AG04450 (cell line): ENCODE measurements at regions of chr2 and their contacts with region 1.

Region 1: DNA sequence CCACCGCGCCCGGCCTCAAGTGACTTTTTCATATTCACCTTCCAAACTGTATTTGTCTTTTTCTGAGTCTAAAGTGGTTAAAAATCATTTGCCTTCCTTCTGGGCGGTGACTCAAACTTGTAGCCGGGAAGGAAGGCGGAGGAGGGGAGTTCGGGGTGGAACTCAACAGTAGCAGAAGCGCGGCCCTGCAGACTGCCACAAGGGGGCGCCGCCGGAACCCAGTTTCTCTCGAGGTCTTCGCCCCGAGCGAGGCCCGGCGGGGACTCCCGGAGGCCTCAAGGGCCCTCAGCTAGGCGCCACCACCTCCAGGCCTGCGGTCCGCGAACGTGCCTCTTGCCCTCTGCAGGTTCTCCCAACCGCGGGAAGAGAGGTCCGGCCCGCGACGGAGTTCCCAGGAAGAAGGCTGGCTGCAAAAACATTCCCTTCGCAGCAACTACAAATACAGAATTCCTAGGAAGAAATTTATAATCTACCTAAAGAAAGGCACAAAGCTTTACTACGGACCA is 16.8 kb upstream of the ITM2C start:
- DNase-seq: peak; percentile 44
- H3K4me3 ChIP-seq: no peak overlapping the region; the same call in 1 of the 2 replicates
- H3K27ac ChIP-seq: no peak overlapping the region
- H3K27me3 ChIP-seq: peaks cover 22% of the 10 kb centered on the region
- CTCF ChIP-seq: peak; percentile 85

Region 2: DNA sequence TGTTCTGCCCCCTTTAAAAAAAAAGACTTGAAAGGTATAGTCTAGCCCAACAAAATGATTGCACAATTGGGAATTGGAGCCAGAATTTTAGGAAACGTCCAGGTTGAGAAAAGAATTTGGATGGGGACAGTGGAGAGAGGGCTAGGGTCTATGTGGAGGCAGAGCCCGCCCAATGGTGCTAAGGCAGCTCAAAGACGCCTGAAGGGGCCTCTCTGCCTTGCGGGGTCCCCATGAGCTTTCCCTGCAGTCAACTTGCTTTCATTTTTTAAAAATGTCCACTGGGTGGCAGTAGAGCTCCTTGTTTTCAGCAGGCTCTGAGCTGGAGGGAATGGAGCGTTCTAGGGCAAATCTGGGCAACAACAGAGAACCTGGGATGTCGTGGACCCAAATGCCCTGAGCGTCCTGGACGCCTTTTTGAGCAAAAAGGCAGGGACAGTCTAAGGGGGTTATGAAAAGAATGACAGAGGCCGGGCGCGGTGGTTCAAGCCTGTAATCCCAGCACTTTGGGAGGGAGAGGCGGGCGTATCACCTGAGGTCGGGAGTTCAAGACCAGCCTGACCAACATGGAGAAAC is 23.4 kb before region 1 on chr2:
- CTCF ChIA-PET with region 1: interaction called, 14 read pairs
- POLR2A ChIA-PET with region 1: no interaction called
- DNase-seq: peak; percentile 70
- H3K4me3 ChIP-seq: peak overlapping the region; percentile 53
- H3K27ac ChIP-seq: no peak overlapping the region
- H3K27me3 ChIP-seq: peaks cover 19% of the 10 kb centered on the region
- CTCF ChIP-seq: peak; percentile 73

Region 3: DNA sequence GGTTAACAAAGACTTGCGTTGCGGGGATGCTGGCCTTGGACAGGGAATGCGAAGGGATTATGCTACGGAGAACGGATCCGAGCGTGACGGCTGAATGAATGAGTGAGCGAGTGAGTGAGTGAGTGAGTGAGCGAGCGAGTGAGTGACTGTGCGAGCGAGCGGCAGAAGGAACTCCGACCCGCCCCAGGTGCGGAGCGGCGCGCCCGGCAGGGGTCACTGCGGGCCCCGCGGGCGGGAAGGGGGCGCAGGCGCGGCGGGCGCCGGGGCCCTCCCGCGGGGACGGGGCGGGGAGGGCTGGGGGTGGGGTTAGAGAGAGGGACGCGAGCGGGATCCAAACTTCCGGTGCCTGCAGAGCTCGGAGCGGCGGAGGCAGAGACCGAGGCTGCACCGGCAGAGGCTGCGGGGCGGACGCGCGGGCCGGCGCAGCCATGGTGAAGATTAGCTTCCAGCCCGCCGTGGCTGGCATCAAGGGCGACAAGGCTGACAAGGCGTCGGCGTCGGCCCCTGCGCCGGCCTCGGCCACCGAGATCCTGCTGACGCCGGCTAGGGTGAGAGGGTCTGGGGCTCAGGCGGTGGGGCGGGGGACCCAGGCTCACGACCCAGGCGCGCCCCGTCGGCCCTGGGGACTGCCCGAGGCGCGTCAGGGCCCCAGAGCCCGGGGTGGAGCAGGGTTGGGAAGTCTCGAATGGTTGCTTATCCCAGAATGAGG is 16.8 kb after region 1 on chr2 and contains the start of gene ITM2C:
- CTCF ChIA-PET with region 1: interaction called, 11 read pairs
- POLR2A ChIA-PET with region 1: no interaction called
- DNase-seq: peak; percentile 7
- H3K4me3 ChIP-seq: peak within 1 kb of the TSS; percentile 82
- H3K27ac ChIP-seq: no peak within 1 kb of the TSS
- H3K27me3 ChIP-seq: peaks cover 28% of the 10 kb centered on the region
- CTCF ChIP-seq: peak; percentile 44
- polyA plus RNA-seq, gene ITM2C: 371 and 551 TPM in 2 replicates

Region 4: GRCh38 chr2:230870544-230871360 is 22.8 kb after region 1 on chr2:
- CTCF ChIA-PET with region 1: interaction called, 11 read pairs
- POLR2A ChIA-PET with region 1: no interaction called
- DNase-seq: no peak
- H3K4me3 ChIP-seq: no peak overlapping the region
- H3K27ac ChIP-seq: no peak overlapping the region
- H3K27me3 ChIP-seq: no peaks in the 10 kb centered on the region
- CTCF ChIP-seq: no peak